Transverse colon (tissue), 4 donors: ENCODE measurements at regions of chr4 and their contacts with region 1.

Region 1: DNA sequence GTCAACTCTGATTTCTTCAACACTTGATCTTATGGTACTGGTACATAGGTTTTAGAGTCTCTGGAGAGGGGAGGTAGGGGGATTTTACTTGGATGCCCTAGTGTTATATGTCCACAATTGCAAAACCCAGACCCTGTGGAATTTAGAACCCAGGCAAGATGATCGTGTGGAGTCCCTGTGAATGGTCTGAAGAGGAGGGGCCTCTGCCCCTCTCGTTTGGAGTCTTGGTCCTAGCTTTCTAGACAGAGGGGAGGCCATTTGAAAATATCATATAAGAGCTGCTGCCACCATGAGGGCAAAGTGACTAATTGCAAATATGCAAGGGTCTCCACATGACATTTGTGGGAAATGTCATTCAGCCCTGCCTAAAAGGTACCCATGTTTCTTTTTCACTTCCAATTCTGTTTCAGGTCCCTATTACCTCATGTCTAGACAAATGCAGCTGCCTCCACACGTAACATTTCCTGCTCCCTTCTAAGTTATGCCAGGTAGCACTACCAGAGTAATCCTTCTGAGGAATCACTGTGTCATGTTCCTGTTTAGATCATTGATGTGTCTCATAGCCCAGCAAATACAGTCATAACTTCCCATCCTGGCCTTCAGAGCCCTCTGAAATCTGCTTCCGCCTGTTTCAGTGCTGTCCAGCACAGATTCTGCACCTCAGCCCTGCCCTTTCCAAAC is 126.8 kb downstream of the KLHL8 start:
- DNase-seq: no peak
- H3K4me3 ChIP-seq: no peak overlapping the region
- H3K27ac ChIP-seq: peak overlapping the region; percentile 29 to 62 (median 45)
- H3K4me1 ChIP-seq: peaks cover 6 to 40% (median 26%) of the 10 kb centered on the region in 4 donors
- H3K27me3 ChIP-seq: no peaks in the 10 kb centered on the region
- CTCF ChIP-seq: peak; percentile 44 to 61 (median 52)
- EP300 ChIP-seq: no peak
- POLR2A ChIP-seq: no peak

Region 2: DNA sequence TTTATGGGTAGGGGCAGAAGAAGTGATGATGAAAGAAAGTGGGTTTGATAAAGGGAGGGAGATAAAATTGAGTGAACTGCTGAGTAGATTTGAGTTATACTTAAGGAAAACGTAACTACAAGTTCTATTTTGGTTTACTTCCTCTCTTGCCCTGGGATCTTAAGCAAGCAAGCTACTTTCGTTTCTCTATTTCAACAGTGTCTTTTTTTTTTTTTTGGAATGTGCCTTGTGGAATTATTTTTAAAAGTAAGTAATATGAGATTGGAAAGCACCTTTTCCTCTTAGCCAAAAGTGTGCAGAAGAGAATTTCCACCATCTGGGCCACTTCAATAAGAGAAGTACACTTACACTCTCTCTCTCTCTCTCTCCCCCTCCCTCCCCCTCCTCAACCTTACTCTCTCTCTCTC is 185.3 kb before region 1 on chr4:
- in situ Hi-C with region 1: no loop called
- intact Hi-C with region 1: no loop called
- DNase-seq: no peak
- H3K4me3 ChIP-seq: no peak overlapping the region
- H3K27ac ChIP-seq: peak overlapping the region in 2 of 4 donors; percentile 19 to 54
- H3K4me1 ChIP-seq: peaks cover 0 to 24% (median 0%) of the 10 kb centered on the region in 4 donors
- H3K27me3 ChIP-seq: no peaks in the 10 kb centered on the region
- CTCF ChIP-seq: no peak
- EP300 ChIP-seq: no peak
- POLR2A ChIP-seq: no peak

Region 3: DNA sequence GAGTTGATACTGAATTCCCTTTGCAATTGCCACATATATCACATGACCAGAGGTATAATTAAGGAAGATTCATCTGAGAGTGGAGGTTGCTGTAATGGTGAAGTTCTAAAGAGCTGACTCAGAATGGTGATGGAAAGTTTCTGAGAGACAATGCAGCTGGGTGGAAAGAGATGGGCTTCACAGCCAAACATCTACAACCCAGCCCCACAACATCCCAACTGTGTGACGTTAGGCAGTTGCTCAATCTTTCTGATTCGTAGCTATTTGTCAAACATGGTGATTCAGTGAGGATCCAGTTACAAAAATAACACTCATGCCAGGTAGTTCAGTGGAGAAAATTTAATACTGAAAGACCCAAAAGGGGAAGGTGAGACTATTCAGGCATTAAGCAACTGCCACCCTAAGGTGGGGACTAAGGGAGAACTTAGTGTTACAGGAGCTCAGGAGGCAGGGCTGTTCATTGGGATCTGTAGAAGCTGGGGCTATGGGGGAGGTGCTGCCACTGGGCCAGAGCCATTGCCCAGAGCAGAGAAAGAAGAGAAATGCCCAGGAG is 165.7 kb before region 1 on chr4:
- in situ Hi-C with region 1: loop called (anchors 5 to 10 kb)
- intact Hi-C with region 1: no loop called
- DNase-seq: peak; percentile 21
- H3K4me3 ChIP-seq: no peak overlapping the region
- H3K27ac ChIP-seq: peak overlapping the region in 1 of 4 donors; percentile 61
- H3K4me1 ChIP-seq: peaks cover 0 to 4% (median 0%) of the 10 kb centered on the region in 4 donors
- H3K27me3 ChIP-seq: no peaks in the 10 kb centered on the region
- CTCF ChIP-seq: no peak
- EP300 ChIP-seq: no peak
- POLR2A ChIP-seq: no peak